H1 (cell line): ENCODE measurements at regions of chr3 and their contacts with region 1.

Region 1: GRCh38 chr3:150763122-150763841 is at the start of gene SIAH2:
- DNase-seq: peak in 1 of 2 experiments; percentile 81
- H3K4me3 ChIP-seq: peak within 1 kb of the TSS; percentile 64 to 79 (median 76)
- H3K27ac ChIP-seq: no peak within 1 kb of the TSS
- H3K4me1 ChIP-seq: peaks cover 5 to 12% (median 10%) of the 10 kb centered on the region in 4 experiments; a peak in 5 of 7 replicates
- H3K27me3 ChIP-seq: peaks cover 0 to 7% (median 3%) of the 10 kb centered on the region in 4 experiments; a peak in 4 of 7 replicates
- CTCF ChIP-seq: 0 out of 4 replicates have a peak, but pooled peaks of 1 of the 3 experiments have one; percentile 11
- EP300 ChIP-seq: peak in 1 of 2 experiments; percentile 44; a peak in 1 of 3 replicates
- POLR2A ChIP-seq: no peak
- RAD21 ChIP-seq: no peak
- total RNA-seq, gene SIAH2: 21.8 and 23.9 TPM in 2 replicates

Region 2: DNA sequence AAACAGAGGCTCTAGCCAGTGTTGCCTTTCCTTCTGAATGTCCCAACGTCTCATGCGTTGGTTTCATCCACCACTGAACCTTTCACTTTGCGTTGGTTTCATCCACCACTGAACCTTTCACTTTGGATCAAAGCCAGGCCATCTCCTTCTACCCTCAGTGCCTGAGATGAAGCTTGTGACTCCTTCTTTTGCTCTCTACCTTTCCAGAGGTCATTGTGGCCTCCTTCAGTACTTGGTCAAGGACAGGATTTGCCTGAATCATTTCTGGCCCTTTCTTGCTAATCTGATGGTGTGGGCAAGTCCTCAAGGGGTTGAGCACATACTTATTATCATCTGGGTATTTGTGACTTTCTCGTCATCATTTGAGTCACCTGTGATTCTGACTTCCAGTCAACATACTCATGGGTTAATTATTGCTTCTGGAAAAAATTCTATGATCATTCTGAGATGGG is 110.1 kb before region 1 on chr3:
- CTCF ChIA-PET with region 1: no interaction called
- POLR2A ChIA-PET with region 1: no interaction called
- DNase-seq: no peak
- H3K4me3 ChIP-seq: no peak overlapping the region
- H3K27ac ChIP-seq: no peak overlapping the region
- H3K4me1 ChIP-seq: peaks cover 0 to 4% (median 0%) of the 10 kb centered on the region in 4 experiments; a peak in 1 of 7 replicates
- H3K27me3 ChIP-seq: no peaks in the 10 kb centered on the region
- CTCF ChIP-seq: no peak
- EP300 ChIP-seq: no peak
- POLR2A ChIP-seq: no peak
- RAD21 ChIP-seq: no peak

Region 3: GRCh38 chr3:150751753-150752263 is 11.5 kb before region 1 on chr3:
- CTCF ChIA-PET with region 1: interaction called, 8 read pairs
- POLR2A ChIA-PET with region 1: interaction called, 10 read pairs
- DNase-seq: no peak
- H3K4me3 ChIP-seq: no peak overlapping the region
- H3K27ac ChIP-seq: no peak overlapping the region
- H3K4me1 ChIP-seq: peaks cover 0 to 2% (median 0%) of the 10 kb centered on the region in 4 experiments; a peak in 2 of 7 replicates
- H3K27me3 ChIP-seq: no peaks in the 10 kb centered on the region
- CTCF ChIP-seq: no peak
- EP300 ChIP-seq: no peak
- POLR2A ChIP-seq: no peak
- RAD21 ChIP-seq: no peak

Region 4: DNA sequence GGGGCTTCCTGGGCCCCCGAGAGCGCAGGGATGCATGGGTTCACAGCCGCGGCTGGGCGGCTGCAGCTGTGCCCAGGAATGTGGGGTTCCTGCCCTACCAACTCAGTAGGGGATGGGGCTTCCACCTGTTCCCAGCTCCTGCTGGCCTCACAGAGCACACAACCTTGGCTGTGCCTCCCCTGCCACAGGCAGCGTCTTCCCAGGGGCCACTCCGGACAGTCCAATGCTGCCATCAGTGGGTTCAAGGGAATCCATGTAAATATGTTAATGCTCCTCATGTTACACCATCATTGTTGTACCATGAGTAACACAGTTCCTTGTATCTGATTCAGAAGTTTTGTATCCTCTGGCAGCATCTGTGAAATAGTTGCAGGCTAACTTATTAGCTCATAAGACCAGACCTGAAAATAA is 11.8 kb after region 1 on chr3:
- CTCF ChIA-PET with region 1: interaction called, 21 read pairs
- POLR2A ChIA-PET with region 1: interaction called, 13 read pairs
- DNase-seq: no peak
- H3K4me3 ChIP-seq: no peak overlapping the region
- H3K27ac ChIP-seq: no peak overlapping the region
- H3K4me1 ChIP-seq: no peaks in the 10 kb centered on the region
- H3K27me3 ChIP-seq: no peaks in the 10 kb centered on the region
- CTCF ChIP-seq: no peak
- EP300 ChIP-seq: no peak
- POLR2A ChIP-seq: no peak
- RAD21 ChIP-seq: no peak

Region 5: DNA sequence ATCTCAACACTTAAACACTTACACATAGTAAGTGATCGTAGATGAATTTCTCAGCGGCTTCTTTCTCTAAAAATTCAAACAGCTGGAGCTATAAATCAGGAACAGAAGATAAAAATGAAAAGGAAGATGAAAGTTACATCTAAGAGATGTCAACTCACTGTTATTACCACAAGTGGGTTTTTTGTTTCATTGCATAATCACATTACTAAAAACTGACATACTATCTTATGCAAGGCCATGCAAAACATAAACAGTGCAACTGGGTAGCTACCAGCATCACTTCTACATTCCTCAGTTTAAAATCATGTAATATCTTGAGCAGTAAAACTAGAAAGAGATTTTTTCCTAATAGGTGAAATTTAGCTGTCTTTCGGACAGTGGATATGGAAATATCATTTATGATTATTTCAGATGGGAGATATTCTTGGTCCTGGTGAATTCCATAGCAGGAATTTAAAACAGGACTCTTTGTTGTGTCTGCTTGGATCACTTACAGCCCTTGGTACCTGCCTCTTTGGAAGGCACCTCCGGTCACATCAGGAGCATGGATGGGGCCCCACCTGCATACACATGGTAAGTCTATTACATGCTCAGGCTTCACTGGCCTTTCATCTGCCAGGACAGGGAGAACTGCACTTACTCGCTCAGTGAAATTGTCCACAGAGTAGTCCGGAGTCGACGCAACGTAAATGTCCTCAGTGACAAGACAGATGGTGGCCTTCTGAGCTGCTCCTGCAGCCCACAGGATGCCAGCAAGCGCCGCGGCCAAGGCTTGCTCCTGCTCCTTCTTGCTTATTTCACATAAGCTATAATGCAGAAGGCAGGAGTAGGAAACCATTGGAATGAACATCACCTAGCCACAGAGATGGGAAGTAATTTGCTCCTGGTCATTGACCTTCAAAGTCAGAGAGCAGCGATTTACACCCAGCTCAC is 127.3 kb after region 1 on chr3:
- CTCF ChIA-PET with region 1: no interaction called
- POLR2A ChIA-PET with region 1: no interaction called
- DNase-seq: no peak
- H3K4me3 ChIP-seq: no peak overlapping the region
- H3K27ac ChIP-seq: no peak overlapping the region
- H3K4me1 ChIP-seq: no peaks in the 10 kb centered on the region
- H3K27me3 ChIP-seq: no peaks in the 10 kb centered on the region
- CTCF ChIP-seq: no peak
- EP300 ChIP-seq: no peak
- POLR2A ChIP-seq: no peak
- RAD21 ChIP-seq: no peak